HCT116 (cell line): ENCODE measurements at regions of chr10 and their contacts with region 1.

Region 1: DNA sequence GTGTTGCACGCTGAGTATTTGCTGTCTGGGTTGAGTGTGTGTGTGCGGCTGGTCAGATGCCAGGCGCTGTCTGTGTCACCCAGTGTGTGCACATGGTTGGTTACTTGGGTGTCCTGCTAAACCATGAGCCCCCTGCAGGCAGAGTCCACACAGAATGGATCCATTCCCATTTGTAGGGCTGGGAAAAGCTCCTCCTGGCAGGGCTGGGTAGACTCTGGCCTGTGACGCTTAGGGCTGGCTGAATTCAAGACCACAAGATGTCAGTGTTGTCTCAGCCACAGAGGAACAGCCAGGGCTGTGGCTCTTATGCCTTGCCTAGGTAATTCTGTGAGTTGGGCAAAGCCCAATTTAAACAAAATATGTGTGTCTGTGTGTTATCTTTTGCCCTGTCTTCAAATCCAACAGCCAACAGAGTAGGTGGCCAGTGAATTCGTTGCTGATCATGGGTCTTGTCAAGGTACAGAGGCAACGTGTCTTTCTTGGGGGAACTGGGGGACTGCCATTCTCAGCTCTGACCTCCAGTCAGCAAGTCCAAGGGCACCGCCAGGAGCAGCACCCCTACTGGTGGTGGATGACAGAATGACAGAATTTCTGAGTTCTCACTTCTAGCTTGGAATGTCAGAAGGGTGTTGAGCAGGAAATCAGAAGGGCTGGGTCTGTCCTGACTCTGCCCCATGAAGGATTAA is 285.1 kb downstream of the CCSER2 start:
- DNase-seq: peak; percentile 72
- ATAC-seq: peak; percentile 98
- H3K4me3 ChIP-seq: no peak overlapping the region
- H3K27ac ChIP-seq: no peak overlapping the region
- H3K4me1 ChIP-seq: peaks cover 0 to 4% of the 10 kb centered on the region in 2 experiments; a peak in 1 of 4 replicates
- H3K27me3 ChIP-seq: peaks cover 13% of the 10 kb centered on the region
- CTCF ChIP-seq: peak; percentile 47 to 80 (median 59)
- POLR2A ChIP-seq: no peak
- RAD21 ChIP-seq: peak; percentile 81

Region 2: GRCh38 chr10:83083831-83084230 is 1529.6 kb before region 1 on chr10:
- CTCF ChIA-PET with region 1: no interaction called
- POLR2A ChIA-PET with region 1: no interaction called
- RAD21 ChIA-PET with region 1: no interaction called
- intact Hi-C with region 1: no loop called
- DNase-seq: no peak
- ATAC-seq: no peak
- H3K4me3 ChIP-seq: no peak overlapping the region
- H3K27ac ChIP-seq: no peak overlapping the region
- H3K4me1 ChIP-seq: no peaks in the 10 kb centered on the region
- H3K27me3 ChIP-seq: no peaks in the 10 kb centered on the region
- CTCF ChIP-seq: no peak
- POLR2A ChIP-seq: no peak
- RAD21 ChIP-seq: no peak

Region 3: DNA sequence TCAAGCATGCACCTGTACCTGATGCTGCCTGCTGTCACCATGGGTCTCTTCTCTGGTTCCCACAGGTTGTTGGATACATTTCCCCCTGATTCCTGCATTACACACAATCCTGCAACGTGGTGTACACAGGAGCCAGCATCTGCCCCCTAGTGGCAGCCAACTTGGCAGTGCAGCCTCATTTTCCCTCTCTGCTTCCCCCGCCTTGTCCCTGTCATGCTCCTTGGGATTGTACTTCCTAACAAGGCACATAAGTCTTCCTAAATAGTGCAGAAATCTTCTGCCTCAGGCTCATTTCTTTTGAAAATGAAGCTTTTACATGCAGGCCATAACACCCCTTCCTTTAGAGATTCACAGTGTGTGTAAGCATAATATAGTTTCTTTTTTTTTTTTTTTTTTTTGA is 102.4 kb after region 1 on chr10:
- CTCF ChIA-PET with region 1: interaction called, 13 read pairs
- POLR2A ChIA-PET with region 1: no interaction called
- RAD21 ChIA-PET with region 1: no interaction called
- intact Hi-C with region 1: loop called (anchors 1 kb)
- DNase-seq: peak; percentile 31
- ATAC-seq: peak; percentile 98
- H3K4me3 ChIP-seq: no peak overlapping the region
- H3K27ac ChIP-seq: no peak overlapping the region
- H3K4me1 ChIP-seq: no peaks in the 10 kb centered on the region
- H3K27me3 ChIP-seq: peaks cover 36% of the 10 kb centered on the region
- CTCF ChIP-seq: peak; percentile 59 to 93 (median 88); a peak in 5 of 6 replicates
- POLR2A ChIP-seq: no peak
- RAD21 ChIP-seq: peak; percentile 54

Region 4: GRCh38 chr10:84743483-84743882 is 130.0 kb after region 1 on chr10:
- CTCF ChIA-PET with region 1: interaction called, 6 read pairs
- POLR2A ChIA-PET with region 1: no interaction called
- RAD21 ChIA-PET with region 1: interaction called in 1 of 2 experiments, 4 read pairs
- intact Hi-C with region 1: loop called (anchors 1 kb)
- DNase-seq: peak; percentile 2
- ATAC-seq: peak; percentile 65
- H3K4me3 ChIP-seq: no peak overlapping the region
- H3K27ac ChIP-seq: no peak overlapping the region
- H3K4me1 ChIP-seq: no peaks in the 10 kb centered on the region
- H3K27me3 ChIP-seq: no peaks in the 10 kb centered on the region
- CTCF ChIP-seq: peak; percentile 28 to 67 (median 64); a peak in 5 of 6 replicates
- POLR2A ChIP-seq: no peak
- RAD21 ChIP-seq: peak; percentile 24; the same call in 1 of the 2 replicates

Region 5: DNA sequence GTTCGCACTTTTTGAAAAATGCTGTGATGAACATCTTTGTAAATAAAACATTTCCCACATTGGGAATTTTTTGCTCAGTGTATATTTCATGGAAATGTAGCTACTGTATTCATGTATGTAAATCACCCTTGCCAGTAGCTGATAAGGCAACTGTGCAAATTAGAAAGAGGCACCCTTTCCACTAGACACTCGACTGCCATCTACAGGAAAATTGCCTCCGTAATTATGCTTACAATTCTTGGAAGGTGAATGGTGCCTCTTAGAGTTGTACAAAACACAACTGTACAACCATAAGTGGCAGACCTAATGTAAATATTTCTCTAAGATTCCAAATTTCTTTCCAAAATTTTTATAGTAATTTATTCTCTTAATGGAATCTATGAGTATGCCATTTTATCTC is 206.6 kb after region 1 on chr10:
- CTCF ChIA-PET with region 1: interaction called, 10 read pairs
- POLR2A ChIA-PET with region 1: no interaction called
- RAD21 ChIA-PET with region 1: interaction called in 1 of 2 experiments, 4 read pairs
- intact Hi-C with region 1: no loop called
- DNase-seq: peak; percentile 10
- ATAC-seq: peak; percentile 78
- H3K4me3 ChIP-seq: no peak overlapping the region
- H3K27ac ChIP-seq: no peak overlapping the region
- H3K4me1 ChIP-seq: no peaks in the 10 kb centered on the region
- H3K27me3 ChIP-seq: no peaks in the 10 kb centered on the region; the same call in 1 of the 2 replicates
- CTCF ChIP-seq: peak; percentile 29 to 46 (median 39); a peak in 4 of 6 replicates
- POLR2A ChIP-seq: no peak
- RAD21 ChIP-seq: peak; percentile 40; the same call in 1 of the 2 replicates